ENCODE measurements at regions of chr19 and their contacts with region 1.

Region 1: GRCh38 chr19:7829561-7830271 is at the start of gene EVI5L:
- DNase-seq: peak; percentile 100
- ATAC-seq: peak; percentile 84
- H3K4me3 ChIP-seq: peak within 1 kb of the TSS; percentile 61
- H3K27ac ChIP-seq: peak within 1 kb of the TSS; percentile 40
- H3K4me1 ChIP-seq: peaks cover 43 to 53% of the 10 kb centered on the region in 2 experiments
- H3K27me3 ChIP-seq: no peaks in the 10 kb centered on the region
- CTCF ChIP-seq: no peak
- POLR2A ChIP-seq: no peak
- RAD21 ChIP-seq: no peak
- total RNA-seq, gene EVI5L: 15.0 TPM

Region 2: GRCh38 chr19:7562646-7563393 is 266.9 kb before region 1 on chr19:
- CTCF ChIA-PET with region 1: interaction called, 15 read pairs
- POLR2A ChIA-PET with region 1: no interaction called
- RAD21 ChIA-PET with region 1: no interaction called
- intact Hi-C with region 1: no loop called
- DNase-seq: no peak
- ATAC-seq: no peak
- H3K4me3 ChIP-seq: no peak overlapping the region
- H3K27ac ChIP-seq: no peak overlapping the region
- H3K4me1 ChIP-seq: no peaks in the 10 kb centered on the region
- H3K27me3 ChIP-seq: no peaks in the 10 kb centered on the region
- CTCF ChIP-seq: no peak
- POLR2A ChIP-seq: no peak
- RAD21 ChIP-seq: no peak

Region 3: GRCh38 chr19:7852851-7853769 is 23.4 kb after region 1 on chr19:
- CTCF ChIA-PET with region 1: interaction called, 10 read pairs
- POLR2A ChIA-PET with region 1: no interaction called
- RAD21 ChIA-PET with region 1: no interaction called
- intact Hi-C with region 1: no loop called
- DNase-seq: peak; percentile 85
- ATAC-seq: peak; percentile 97
- H3K4me3 ChIP-seq: peak overlapping the region in 1 of 2 experiments; percentile 9; a peak in 1 of 4 replicates
- H3K27ac ChIP-seq: no peak overlapping the region
- H3K4me1 ChIP-seq: peaks cover 11 to 18% of the 10 kb centered on the region in 2 experiments; a peak in 3 of 4 replicates
- H3K27me3 ChIP-seq: no peaks in the 10 kb centered on the region
- CTCF ChIP-seq: peak; percentile 83 to 91 (median 84)
- POLR2A ChIP-seq: no peak
- RAD21 ChIP-seq: peak; percentile 96

Measured in HCT116 (cell line).